ENCODE measurements at regions of chr7 and their contacts with region 1.

Region 1: GRCh38 chr7:149028346-149029109 is at the start of gene PDIA4:
- DNase-seq: peak; percentile 100
- H3K4me3 ChIP-seq: peak within 1 kb of the TSS; percentile 80 to 91 (median 90)
- H3K27ac ChIP-seq: peak within 1 kb of the TSS; percentile 56
- H3K4me1 ChIP-seq: peaks cover 12% of the 10 kb centered on the region
- H3K27me3 ChIP-seq: no peaks in the 10 kb centered on the region
- CTCF ChIP-seq: peak in 1 of 2 donors; percentile 50
- POLR2A ChIP-seq: peak; percentile 73
- total RNA-seq, gene PDIA4: 306 and 308 TPM in 2 replicates

Region 2: GRCh38 chr7:148894591-148894990 is 133.9 kb before region 1 on chr7:
- CTCF ChIA-PET with region 1: no interaction called
- POLR2A ChIA-PET with region 1: no interaction called
- dilution Hi-C with region 1: no loop called
- intact Hi-C with region 1: no loop called
- DNase-seq: no peak
- H3K4me3 ChIP-seq: no peak overlapping the region
- H3K27ac ChIP-seq: no peak overlapping the region
- H3K4me1 ChIP-seq: no peaks in the 10 kb centered on the region
- H3K27me3 ChIP-seq: peaks cover 0 to 2% of the 10 kb centered on the region in 2 experiments
- CTCF ChIP-seq: no peak
- POLR2A ChIP-seq: no peak

Region 3: GRCh38 chr7:148987010-148987750 is 41.3 kb before region 1 on chr7:
- CTCF ChIA-PET with region 1: no interaction called
- POLR2A ChIA-PET with region 1: no interaction called
- dilution Hi-C with region 1: no loop called
- intact Hi-C with region 1: loop called (anchors 1 kb)
- DNase-seq: peak; percentile 94
- H3K4me3 ChIP-seq: peak overlapping the region; percentile 21 to 63 (median 56)
- H3K27ac ChIP-seq: peak overlapping the region; percentile 32
- H3K4me1 ChIP-seq: peaks cover 11% of the 10 kb centered on the region
- H3K27me3 ChIP-seq: peaks cover 0 to 10% of the 10 kb centered on the region in 2 experiments
- CTCF ChIP-seq: no peak
- POLR2A ChIP-seq: peak; percentile 63

Region 4: DNA sequence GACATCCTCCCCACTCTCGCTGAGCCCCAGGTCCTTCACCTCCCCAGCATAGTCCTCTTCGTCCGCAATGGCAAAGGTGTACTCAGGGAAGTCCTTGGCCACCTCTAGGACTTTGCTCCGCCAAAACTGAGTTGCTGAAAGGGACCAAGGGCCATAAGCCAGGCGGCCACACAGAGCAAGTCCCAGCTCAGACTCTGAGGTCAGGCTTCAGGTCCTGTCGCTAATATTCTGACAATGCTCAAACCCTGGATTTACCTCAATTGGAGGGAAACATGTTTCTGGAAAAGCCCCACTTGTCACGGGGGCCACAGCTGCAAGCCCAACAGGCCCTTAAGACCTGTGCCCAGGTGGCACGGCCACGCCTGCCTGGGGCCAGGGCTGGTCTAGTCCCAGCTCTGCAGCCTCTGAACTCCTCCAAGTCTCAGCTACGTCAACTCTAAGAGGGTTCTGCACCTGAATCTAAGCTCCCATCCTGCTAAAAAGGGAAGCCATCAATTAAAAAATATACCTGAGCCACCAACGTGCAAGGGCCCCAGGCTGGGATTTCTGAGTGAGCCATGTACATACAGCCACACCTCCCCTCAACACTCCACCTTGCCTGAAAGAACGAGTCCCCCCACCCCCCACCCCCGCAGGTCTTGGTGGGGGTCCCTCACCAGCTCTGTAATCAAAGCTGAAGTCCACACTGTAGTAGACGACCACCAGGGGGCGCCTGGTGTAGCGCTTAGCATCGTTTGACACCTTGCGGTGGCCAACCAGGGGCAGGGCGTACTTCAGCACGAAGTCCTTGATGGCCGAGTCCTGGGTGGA is 23.1 kb before region 1 on chr7:
- CTCF ChIA-PET with region 1: interaction called, 40 read pairs
- POLR2A ChIA-PET with region 1: no interaction called
- dilution Hi-C with region 1: no loop called
- intact Hi-C with region 1: loop called (anchors 1 kb)
- DNase-seq: peak; percentile 65
- H3K4me3 ChIP-seq: no peak overlapping the region
- H3K27ac ChIP-seq: no peak overlapping the region
- H3K4me1 ChIP-seq: no peaks in the 10 kb centered on the region
- H3K27me3 ChIP-seq: no peaks in the 10 kb centered on the region
- CTCF ChIP-seq: peak; percentile 66 to 91
- POLR2A ChIP-seq: no peak

Region 5: GRCh38 chr7:149147072-149147751 is 118.7 kb after region 1 on chr7 and contains the start of gene ZNF398:
- CTCF ChIA-PET with region 1: interaction called, 5 read pairs
- POLR2A ChIA-PET with region 1: no interaction called
- dilution Hi-C with region 1: no loop called
- intact Hi-C with region 1: loop called (anchors 5 kb)
- DNase-seq: peak; percentile 75
- H3K4me3 ChIP-seq: peak within 1 kb of the TSS; percentile 74 to 98 (median 87)
- H3K27ac ChIP-seq: peak within 1 kb of the TSS; percentile 57
- H3K4me1 ChIP-seq: peaks cover 4% of the 10 kb centered on the region
- H3K27me3 ChIP-seq: no peaks in the 10 kb centered on the region
- CTCF ChIP-seq: peak; percentile 42 to 79
- POLR2A ChIP-seq: peak; percentile 63
- total RNA-seq, gene ZNF398: 8.6 and 10.6 TPM in 2 replicates